ENCODE measurements at regions of chr1 and their contacts with region 1.

Region 1: GRCh38 chr1:61043010-61043820 is 39.1 kb upstream of the NFIA start:
- DNase-seq: peak; percentile 93
- ATAC-seq: peak; percentile 95 to 97

Region 2: DNA sequence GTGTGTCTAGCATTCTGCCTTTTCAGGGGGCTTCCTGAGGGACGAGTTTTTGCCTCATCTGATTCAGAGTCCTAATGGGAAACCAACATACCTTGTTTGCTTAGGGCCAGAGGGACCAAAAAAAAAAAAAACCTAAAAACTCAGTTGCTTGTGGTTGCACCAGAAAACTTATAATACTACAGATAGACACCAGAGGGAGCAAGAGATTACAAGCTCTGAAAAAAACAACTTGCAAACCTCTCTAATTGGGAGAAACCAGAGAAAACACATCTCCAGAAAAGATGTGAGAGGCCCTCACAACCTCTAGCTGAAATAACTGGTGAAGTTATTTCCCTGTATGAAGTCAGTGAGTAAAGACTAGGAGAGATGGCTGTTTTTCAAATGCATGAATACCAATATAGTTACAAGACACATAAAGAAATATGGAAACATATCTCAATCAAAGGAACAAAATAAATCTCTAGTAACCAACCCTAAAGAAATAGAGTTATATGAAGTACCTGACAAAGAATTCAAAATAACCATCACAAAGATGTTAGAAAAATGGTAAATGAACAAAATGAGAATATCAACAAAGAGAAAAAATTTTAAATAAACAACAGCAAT is 194.5 kb before region 1 on chr1:
- intact Hi-C with region 1: loop called (anchors 5 kb)
- DNase-seq: no peak
- ATAC-seq: no peak

Region 3: DNA sequence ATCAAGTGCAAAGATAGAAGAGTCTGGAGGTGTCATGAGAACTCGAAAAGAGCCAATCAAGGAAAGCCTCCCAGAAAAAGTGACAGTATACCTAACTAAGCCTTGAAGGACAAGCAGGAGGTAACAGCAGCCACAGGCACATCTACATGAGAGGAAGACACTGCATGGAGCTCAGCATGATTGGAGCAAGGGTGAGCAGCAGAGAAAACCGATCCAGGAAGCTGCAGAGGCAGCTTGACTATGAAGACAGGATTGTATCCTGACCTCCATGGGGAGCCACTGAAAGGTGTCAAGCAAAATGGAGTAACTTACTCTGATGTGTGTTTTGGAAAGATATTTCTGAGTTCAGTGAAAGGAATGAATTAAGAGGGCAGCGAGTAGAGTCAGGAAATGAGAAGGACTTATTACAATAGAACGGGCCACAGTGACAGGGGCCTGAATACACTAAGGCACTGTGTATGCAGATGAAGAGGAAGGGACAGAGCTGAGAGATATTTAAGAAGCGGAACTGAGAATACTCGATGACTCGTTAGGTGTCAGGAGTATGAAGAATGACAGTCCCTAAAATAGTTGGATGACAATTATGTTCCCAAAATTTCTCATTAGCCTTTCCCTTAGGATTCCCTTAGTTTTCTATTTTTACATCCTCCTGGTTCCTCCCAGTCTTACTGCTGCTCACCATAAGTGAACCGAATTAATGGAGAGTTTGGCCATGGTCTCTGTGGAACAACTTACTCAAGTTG is 100.1 kb before region 1 on chr1:
- intact Hi-C with region 1: no loop called
- DNase-seq: no peak
- ATAC-seq: peak; percentile 85 to 94

Region 4: GRCh38 chr1:60969971-60970509 is 73.2 kb before region 1 on chr1:
- intact Hi-C with region 1: loop called in 1 of 2 experiments (anchors 5 kb)
- DNase-seq: no peak
- ATAC-seq: peak; percentile 59 to 83

Region 5: GRCh38 chr1:61120998-61121397 is 77.8 kb after region 1 on chr1:
- intact Hi-C with region 1: no loop called
- DNase-seq: no peak
- ATAC-seq: peak; percentile 63 to 66

Measured in left cardiac atrium (tissue), 4 donors.